ENCODE measurements at regions of chr11 and their contacts with region 1.

Region 1: DNA sequence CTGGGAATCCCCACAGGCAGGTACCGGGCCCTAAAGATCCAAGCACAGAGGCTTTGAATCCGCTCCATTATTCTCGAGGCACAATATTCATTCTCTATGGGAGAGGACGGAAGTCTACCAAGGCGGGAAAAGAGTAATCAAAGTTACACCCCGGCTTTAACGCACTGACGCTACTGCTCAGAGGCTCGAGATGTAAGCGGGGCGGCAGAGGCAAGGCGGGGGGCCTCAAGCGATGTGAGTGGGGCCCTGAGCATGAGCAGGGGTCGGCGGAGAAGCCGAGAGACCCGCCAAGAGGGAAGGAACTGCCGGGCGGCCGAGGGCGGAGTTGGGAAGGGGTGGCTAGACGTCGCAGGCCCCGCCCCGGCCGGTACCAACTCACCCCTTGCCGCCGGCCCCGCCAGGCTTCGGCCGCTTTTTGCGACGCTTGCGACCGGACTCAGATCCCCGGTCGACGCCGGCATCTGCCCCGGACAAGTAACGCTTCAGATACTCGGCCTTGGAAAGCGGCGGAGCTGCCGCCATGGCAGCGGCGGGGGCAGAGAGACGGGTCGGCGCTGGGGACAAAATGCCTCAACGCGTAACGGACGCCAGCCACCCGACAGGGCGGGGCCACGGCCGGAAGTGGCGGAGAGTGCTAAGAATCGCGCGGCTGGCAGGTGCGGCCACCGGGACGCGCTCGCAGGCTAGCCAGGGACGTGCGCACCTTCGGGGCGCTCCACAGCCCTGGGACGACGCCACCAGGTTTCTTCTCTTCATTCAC is at the start of gene BUD13:
- DNase-seq: peak; percentile 96
- H3K4me3 ChIP-seq: peak within 1 kb of the TSS; percentile 80 to 90 (median 83)
- H3K27ac ChIP-seq: peak within 1 kb of the TSS; percentile 87 to 94 (median 92)
- H3K4me1 ChIP-seq: peaks cover 20 to 32% (median 28%) of the 10 kb centered on the region in 4 donors
- H3K27me3 ChIP-seq: no peaks in the 10 kb centered on the region
- CTCF ChIP-seq: peak in 2 of 3 experiments; percentile 13 to 21
- EP300 ChIP-seq: no peak
- POLR2A ChIP-seq: no peak
- total RNA-seq, gene BUD13: 10.8 to 17.1 (median 12.5) TPM

Region 2: DNA sequence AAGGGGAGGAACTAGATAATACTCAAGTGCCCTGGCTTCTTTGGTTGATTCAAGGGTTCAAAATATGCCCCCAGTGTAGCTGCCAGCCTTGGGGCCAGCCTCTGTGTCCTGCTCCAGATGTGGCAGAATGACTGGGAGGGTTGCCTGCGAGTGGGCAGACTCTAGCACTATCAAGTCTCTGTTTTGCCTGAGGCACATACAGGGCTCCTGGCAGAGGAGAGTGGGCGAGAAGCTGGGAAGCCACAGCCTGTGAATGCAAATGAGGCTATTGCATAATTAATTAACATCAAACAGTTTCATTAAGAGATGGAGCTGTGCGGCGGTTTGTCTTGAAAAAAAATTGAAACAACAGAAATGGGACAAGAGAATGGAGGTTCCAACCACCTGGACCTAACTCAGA is 50.6 kb before region 1 on chr11:
- intact Hi-C with region 1: no loop called
- DNase-seq: no peak
- H3K4me3 ChIP-seq: no peak overlapping the region
- H3K27ac ChIP-seq: no peak overlapping the region
- H3K4me1 ChIP-seq: no peaks in the 10 kb centered on the region
- H3K27me3 ChIP-seq: peaks cover 0 to 31% (median 0%) of the 10 kb centered on the region in 4 donors
- CTCF ChIP-seq: no peak
- EP300 ChIP-seq: no peak
- POLR2A ChIP-seq: no peak

Region 3: GRCh38 chr11:117232092-117232878 is 459.7 kb after region 1 on chr11 and contains the start of gene RNF214:
- intact Hi-C with region 1: loop called (anchors 10 kb)
- DNase-seq: peak; percentile 93
- H3K4me3 ChIP-seq: peak within 1 kb of the TSS; percentile 95 to 98 (median 96)
- H3K27ac ChIP-seq: peak within 1 kb of the TSS; percentile 96 to 100 (median 98)
- H3K4me1 ChIP-seq: peaks cover 24 to 48% (median 40%) of the 10 kb centered on the region in 4 donors
- H3K27me3 ChIP-seq: no peaks in the 10 kb centered on the region
- CTCF ChIP-seq: peak in 2 of 3 experiments; percentile 94 to 98
- EP300 ChIP-seq: no peak
- POLR2A ChIP-seq: peak; percentile 58
- total RNA-seq, gene RNF214: 12.4 to 21.5 (median 18.4) TPM

Region 4: GRCh38 chr11:117327567-117328374 is 555.1 kb after region 1 on chr11 and contains the start of gene CEP164:
- intact Hi-C with region 1: loop called (anchors 10 kb)
- DNase-seq: peak; percentile 99
- H3K4me3 ChIP-seq: peak within 1 kb of the TSS; percentile 65 to 82 (median 70)
- H3K27ac ChIP-seq: peak within 1 kb of the TSS; percentile 88 to 94 (median 90)
- H3K4me1 ChIP-seq: peaks cover 8 to 18% (median 14%) of the 10 kb centered on the region in 4 donors
- H3K27me3 ChIP-seq: no peaks in the 10 kb centered on the region
- CTCF ChIP-seq: no peak
- EP300 ChIP-seq: no peak
- POLR2A ChIP-seq: peak; percentile 9
- total RNA-seq, gene CEP164: 16.4 to 21.2 (median 18.7) TPM

Measured in esophagus muscularis mucosa (tissue), 4 donors.